Aorta (tissue), 5 donors: ENCODE measurements at regions of chr1 and their contacts with region 1.

Region 1: DNA sequence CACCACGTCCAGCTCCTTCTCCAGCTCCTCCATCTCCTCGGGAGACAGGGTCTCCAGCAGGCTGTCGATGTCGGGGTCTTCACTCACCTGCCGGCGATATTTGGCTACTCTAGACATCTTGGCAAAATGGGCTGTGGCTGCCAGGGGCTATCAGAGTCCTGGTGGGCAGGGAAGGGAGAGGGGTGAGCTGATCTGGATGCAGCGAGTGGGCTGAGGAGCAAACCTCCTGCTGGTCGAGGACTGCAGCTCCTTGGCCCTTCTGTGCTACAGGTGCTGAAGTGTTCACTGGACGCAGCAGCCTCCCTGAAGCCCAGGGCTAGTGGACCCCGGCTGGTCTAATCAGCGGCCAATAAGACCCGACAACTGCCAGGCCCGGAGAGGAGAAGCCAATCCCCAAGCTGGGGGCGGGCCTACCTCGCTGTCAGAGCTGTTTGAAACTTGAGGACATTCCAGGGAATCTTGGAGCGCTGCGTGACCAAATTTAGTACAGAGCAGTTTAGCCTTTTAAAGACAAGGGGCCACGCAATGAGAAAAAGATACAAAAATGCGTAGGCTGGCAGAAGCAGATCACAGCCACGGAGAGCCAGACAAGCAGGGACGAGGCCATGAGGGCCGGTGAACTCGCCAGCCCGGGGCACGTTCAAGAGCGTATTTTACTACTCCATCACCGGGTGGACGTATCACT is at the start of gene LMOD1:
- DNase-seq: peak; percentile 95 to 96
- ATAC-seq: peak; percentile 91
- H3K4me3 ChIP-seq: peak within 1 kb of the TSS; percentile 77 to 100
- H3K27ac ChIP-seq: peak within 1 kb of the TSS; percentile 99
- H3K4me1 ChIP-seq: peaks cover 2 to 3% of the 10 kb centered on the region in 2 donors
- H3K27me3 ChIP-seq: no peaks in the 10 kb centered on the region
- total RNA-seq, gene LMOD1: 347 to 469 TPM

Region 2: DNA sequence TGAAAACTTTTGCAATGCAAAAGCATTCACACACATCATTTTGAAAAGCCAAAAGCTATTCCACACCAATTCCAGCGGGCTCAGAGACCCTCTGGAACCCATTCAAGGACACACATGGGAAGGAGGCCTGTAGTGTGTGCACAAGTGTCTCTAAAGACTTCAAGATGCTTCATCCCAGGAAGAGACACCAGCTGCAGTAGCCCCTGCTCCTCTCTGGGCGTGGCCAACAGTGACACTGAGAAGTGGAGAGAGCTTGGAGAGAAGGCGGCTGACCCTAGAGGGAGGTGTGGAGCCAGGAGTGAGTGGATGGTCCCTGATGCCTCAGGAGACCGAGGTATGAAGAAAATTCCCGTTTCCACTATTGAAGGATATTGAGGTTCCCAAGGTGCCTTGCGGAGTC is 510.0 kb before region 1 on chr1:
- intact Hi-C with region 1: no loop called
- DNase-seq: no peak
- ATAC-seq: no peak
- H3K4me3 ChIP-seq: no peak overlapping the region
- H3K27ac ChIP-seq: no peak overlapping the region
- H3K4me1 ChIP-seq: peaks cover 0 to 2% of the 10 kb centered on the region in 2 donors
- H3K27me3 ChIP-seq: no peaks in the 10 kb centered on the region

Region 3: DNA sequence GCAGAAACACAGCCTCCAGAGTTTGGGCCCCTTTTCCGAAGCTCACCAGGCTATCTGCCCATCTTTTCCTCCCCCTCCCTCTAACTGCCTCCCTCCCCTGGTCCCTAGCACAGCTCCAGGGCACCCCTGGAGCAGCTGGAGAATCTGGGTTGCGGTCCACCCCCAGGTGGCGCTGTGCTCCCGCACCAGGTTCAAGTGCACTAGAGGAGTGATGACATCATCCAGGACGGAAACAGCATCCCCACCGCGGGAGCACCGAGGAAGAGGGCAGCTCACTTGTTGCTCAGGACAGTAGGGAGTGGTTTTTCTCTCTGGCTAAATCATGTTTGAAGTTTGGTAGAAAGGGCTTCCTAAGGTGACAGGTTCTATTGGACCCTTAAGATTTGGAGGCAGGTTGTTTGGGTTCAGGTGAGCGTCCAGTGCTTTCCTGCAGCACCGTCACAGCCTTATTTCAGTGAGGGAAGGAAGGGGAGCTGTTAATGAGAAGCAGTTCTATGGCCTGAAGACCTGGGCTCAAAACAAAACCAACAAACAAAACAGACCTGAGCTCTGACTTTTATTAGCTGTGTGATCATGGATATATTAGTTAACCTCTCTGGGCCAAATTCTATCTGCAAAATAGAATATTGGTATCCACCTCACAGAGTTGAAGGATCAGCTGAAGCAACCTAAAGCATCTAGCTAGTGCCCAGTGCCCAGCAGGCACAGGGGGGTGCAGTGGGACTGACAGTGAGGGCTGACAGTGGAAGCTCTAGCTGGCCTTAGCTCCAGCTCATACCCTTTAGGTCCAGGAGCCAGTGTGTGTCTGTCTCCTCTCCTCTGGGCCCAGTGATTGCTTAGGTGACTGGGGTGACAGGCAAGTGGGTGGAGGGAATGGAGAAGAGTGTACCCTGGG is 50.2 kb before region 1 on chr1:
- intact Hi-C with region 1: loop called (anchors 1 to 2 kb)
- DNase-seq: peak; percentile 94 to 98
- ATAC-seq: peak; percentile 90
- H3K4me3 ChIP-seq: no peak overlapping the region
- H3K27ac ChIP-seq: peak overlapping the region; percentile 25 to 88
- H3K4me1 ChIP-seq: peaks cover 0 to 6% of the 10 kb centered on the region in 2 donors
- H3K27me3 ChIP-seq: no peaks in the 10 kb centered on the region

Region 4: DNA sequence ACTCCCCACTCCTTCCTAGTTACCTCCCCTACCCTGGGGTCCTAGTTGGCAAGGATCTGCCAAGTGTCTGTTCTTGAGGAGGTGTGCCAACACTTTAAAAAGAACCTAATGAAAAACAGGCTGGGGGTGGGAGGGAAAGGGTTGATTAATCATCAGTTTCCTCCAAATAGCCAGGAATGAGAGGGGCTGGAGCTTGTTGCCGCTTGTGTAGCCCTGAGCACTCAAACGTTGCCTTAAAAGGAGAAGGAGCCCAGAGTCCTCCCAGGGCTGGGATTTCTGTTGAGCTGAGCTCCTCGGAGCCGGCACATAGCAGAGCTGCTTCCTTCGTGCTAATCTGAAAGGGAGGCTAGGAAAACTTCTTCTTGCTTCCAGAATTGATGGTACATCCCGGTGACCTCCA is 41.8 kb before region 1 on chr1:
- intact Hi-C with region 1: loop called in 1 of 2 experiments (anchors 2 kb)
- DNase-seq: peak; percentile 84 to 86
- ATAC-seq: peak; percentile 83
- H3K4me3 ChIP-seq: no peak overlapping the region
- H3K27ac ChIP-seq: peak overlapping the region; percentile 98 to 100
- H3K4me1 ChIP-seq: peaks cover 6 to 7% of the 10 kb centered on the region in 2 donors
- H3K27me3 ChIP-seq: no peaks in the 10 kb centered on the region

Region 5: GRCh38 chr1:201916649-201917249 is 29.6 kb before region 1 on chr1:
- intact Hi-C with region 1: loop called in 1 of 2 experiments (anchors 1 kb)
- DNase-seq: peak; percentile 94
- ATAC-seq: peak; percentile 77
- H3K4me3 ChIP-seq: no peak overlapping the region
- H3K27ac ChIP-seq: peak overlapping the region; percentile 7 to 97
- H3K4me1 ChIP-seq: peaks cover 2 to 6% of the 10 kb centered on the region in 2 donors
- H3K27me3 ChIP-seq: no peaks in the 10 kb centered on the region

Region 6: GRCh38 chr1:201928266-201928665 is 18.1 kb before region 1 on chr1:
- intact Hi-C with region 1: loop called in 1 of 2 experiments (anchors 1 kb)
- DNase-seq: no peak
- ATAC-seq: no peak
- H3K4me3 ChIP-seq: no peak overlapping the region
- H3K27ac ChIP-seq: peak overlapping the region in 1 of 2 donors; percentile 59
- H3K4me1 ChIP-seq: peaks cover 6 to 7% of the 10 kb centered on the region in 2 donors
- H3K27me3 ChIP-seq: no peaks in the 10 kb centered on the region

Region 7: DNA sequence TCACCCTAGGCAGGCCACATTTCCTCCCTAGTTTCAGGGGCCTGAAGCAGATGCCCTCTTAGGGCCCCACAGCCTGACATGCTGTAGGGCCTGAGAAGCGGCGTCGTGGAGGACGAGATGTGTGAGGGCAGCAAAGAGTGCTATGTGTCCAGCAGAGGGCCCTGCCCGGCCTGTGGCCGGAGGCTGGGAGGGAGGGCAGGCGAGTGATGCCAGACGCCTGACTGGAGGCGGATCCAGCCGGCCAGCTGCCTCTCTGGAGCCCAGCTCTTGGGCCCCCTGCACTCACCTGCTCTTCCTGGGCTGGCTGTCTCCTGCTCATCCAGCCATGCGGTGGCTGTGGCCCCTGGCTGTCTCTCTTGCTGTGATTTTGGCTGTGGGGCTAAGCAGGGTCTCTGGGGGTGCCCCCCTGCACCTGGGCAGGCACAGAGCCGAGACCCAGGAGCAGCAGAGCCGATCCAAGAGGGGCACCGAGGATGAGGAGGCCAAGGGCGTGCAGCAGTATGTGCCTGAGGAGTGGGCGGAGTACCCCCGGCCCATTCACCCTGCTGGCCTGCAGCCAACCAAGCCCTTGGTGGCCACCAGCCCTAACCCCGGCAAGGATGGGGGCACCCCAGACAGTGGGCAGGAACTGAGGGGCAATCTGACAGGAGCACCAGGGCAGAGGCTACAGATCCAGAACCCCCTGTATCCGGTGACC is 176.4 kb after region 1 on chr1 and contains the start of gene GPR37L1:
- intact Hi-C with region 1: no loop called
- DNase-seq: peak in 1 of 2 donors; percentile 87
- ATAC-seq: peak; percentile 70
- H3K4me3 ChIP-seq: no peak within 1 kb of the TSS
- H3K27ac ChIP-seq: no peak within 1 kb of the TSS
- H3K4me1 ChIP-seq: no peaks in the 10 kb centered on the region
- H3K27me3 ChIP-seq: no peaks in the 10 kb centered on the region
- total RNA-seq, gene GPR37L1: 0.06 TPM in 1 of 2 donors, not detected in the other